Activated CD4-positive, alpha-beta memory T cell treated with anti-CD3 and anti-CD28 coated beads for 36 hours (primary cell): ENCODE measurements at regions of chrX and their contacts with region 1.

Region 1: DNA sequence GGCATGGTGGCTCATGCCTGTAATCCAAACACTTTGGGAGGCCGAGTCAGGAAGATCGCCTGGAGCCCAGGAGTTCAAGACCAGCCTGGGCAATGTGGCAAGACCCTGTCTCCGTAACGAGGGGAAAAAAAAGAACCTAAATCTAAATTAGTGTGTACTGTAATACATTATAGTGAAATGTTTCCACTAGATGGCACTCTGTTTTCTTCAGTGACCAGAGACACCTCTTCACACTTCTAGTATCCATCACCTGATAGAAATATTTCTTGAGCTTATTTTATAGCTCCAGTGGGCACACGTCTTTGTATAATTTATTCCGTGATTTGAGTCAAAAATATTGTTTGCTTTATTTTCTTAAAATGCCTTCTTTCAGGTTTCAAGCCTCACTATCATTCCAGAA is 600.9 kb upstream of the DIPK2B start:
- DNase-seq: no peak
- H3K4me3 Mint-ChIP-seq: peak overlapping the region; percentile 43
- H3K27ac Mint-ChIP-seq: peak overlapping the region; percentile 84
- H3K4me1 Mint-ChIP-seq: peaks cover 74% of the 10 kb centered on the region
- H3K27me3 Mint-ChIP-seq: no peaks in the 10 kb centered on the region

Region 2: GRCh38 chrX:45621376-45622041 is 180.0 kb before region 1 on chrX:
- CTCF ChIA-PET with region 1: no interaction called
- POLR2A ChIA-PET with region 1: no interaction called
- intact Hi-C with region 1: loop called (anchors 2 kb)
- DNase-seq: peak; percentile 31
- H3K4me3 Mint-ChIP-seq: no peak overlapping the region
- H3K27ac Mint-ChIP-seq: peak overlapping the region; percentile 83
- H3K4me1 Mint-ChIP-seq: peaks cover 23% of the 10 kb centered on the region
- H3K27me3 Mint-ChIP-seq: peaks cover 2% of the 10 kb centered on the region

Region 3: GRCh38 chrX:45719751-45720501 is 81.6 kb before region 1 on chrX:
- CTCF ChIA-PET with region 1: no interaction called
- POLR2A ChIA-PET with region 1: no interaction called
- intact Hi-C with region 1: no loop called
- DNase-seq: no peak
- H3K4me3 Mint-ChIP-seq: no peak overlapping the region
- H3K27ac Mint-ChIP-seq: no peak overlapping the region
- H3K4me1 Mint-ChIP-seq: peaks cover 35% of the 10 kb centered on the region
- H3K27me3 Mint-ChIP-seq: no peaks in the 10 kb centered on the region

Region 4: GRCh38 chrX:45769761-45770582 is 31.6 kb before region 1 on chrX:
- CTCF ChIA-PET with region 1: interaction called, 7 read pairs
- POLR2A ChIA-PET with region 1: interaction called, 25 read pairs
- intact Hi-C with region 1: loop called (anchors 1 kb)
- DNase-seq: peak; percentile 63
- H3K4me3 Mint-ChIP-seq: peak overlapping the region; percentile 84
- H3K27ac Mint-ChIP-seq: peak overlapping the region; percentile 95
- H3K4me1 Mint-ChIP-seq: peaks cover 54% of the 10 kb centered on the region
- H3K27me3 Mint-ChIP-seq: no peaks in the 10 kb centered on the region

Region 5: DNA sequence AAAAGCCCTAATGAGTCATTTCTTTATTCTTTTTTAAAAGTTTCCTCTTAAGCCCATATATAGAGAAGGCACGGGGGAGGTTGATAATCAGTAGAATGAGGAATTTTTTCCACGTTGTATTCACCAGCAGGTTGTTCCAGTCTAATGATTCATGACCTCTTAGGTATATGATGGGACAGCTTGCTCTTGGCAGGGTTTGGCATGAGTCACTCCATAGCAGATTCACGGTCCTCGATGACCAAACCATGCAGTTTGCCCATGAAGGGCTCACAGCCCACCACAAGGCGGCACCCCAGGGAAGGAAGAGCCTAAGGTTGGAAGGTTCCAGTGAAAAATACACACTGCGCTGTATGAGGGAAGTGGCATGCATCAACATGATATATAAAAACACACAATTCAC is 22.9 kb after region 1 on chrX:
- CTCF ChIA-PET with region 1: interaction called, 7 read pairs
- POLR2A ChIA-PET with region 1: interaction called, 3 read pairs
- intact Hi-C with region 1: loop called (anchors 1 kb)
- DNase-seq: peak; percentile 77
- H3K4me3 Mint-ChIP-seq: no peak overlapping the region
- H3K27ac Mint-ChIP-seq: peak overlapping the region; percentile 89
- H3K4me1 Mint-ChIP-seq: peaks cover 57% of the 10 kb centered on the region
- H3K27me3 Mint-ChIP-seq: no peaks in the 10 kb centered on the region

Region 6: DNA sequence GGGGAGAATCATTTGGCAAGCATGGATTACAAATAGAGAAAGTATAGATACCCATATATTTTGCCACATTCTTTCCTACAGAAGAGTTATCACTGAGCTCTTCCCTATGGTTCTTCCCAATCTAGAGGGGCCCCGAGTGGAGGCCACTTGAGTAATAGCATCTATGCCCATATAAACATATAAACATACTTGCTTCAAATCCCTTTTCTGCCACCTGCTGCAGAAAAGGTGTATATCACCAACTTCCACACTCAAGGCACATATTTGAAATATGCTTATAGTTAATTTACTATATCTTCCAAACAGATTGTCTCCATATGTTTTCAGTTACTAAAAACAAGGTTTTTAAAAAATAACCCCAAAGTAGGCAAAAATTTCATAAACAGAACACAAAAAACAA is 42.0 kb after region 1 on chrX:
- CTCF ChIA-PET with region 1: interaction called, 9 read pairs
- POLR2A ChIA-PET with region 1: interaction called, 7 read pairs
- intact Hi-C with region 1: loop called (anchors 1 kb)
- DNase-seq: no peak
- H3K4me3 Mint-ChIP-seq: no peak overlapping the region
- H3K27ac Mint-ChIP-seq: peak overlapping the region; percentile 86
- H3K4me1 Mint-ChIP-seq: peaks cover 49% of the 10 kb centered on the region
- H3K27me3 Mint-ChIP-seq: no peaks in the 10 kb centered on the region